AG04450 (cell line): ENCODE measurements at regions of chr7 and their contacts with region 1.

Region 1: GRCh38 chr7:24819916-24820689 is 62.8 kb upstream of the GSDME start:
- DNase-seq: peak; percentile 75
- H3K4me3 ChIP-seq: no peak overlapping the region
- H3K27ac ChIP-seq: peak overlapping the region; percentile 35
- H3K27me3 ChIP-seq: no peaks in the 10 kb centered on the region
- CTCF ChIP-seq: peak; percentile 94

Region 2: DNA sequence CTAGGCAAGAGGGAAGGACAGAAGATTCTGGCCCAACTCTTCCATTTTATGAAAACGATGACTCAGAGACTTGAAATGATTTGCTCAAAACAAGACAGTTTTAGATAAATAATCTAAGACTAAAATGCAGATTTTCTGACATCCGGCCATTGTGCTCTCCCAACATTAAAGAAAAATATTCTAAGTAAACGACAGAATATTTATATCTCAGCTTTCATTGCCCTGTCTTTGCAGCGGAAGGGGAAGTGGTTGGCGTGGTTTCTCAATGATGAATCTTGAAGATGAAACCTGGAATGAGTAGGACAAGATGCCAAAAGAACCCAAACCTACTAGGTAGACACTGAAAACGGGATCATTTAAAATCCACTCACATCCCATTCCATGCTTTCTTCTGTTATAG is 565.0 kb before region 1 on chr7:
- CTCF ChIA-PET with region 1: no interaction called
- POLR2A ChIA-PET with region 1: no interaction called
- DNase-seq: no peak
- H3K4me3 ChIP-seq: no peak overlapping the region
- H3K27ac ChIP-seq: no peak overlapping the region
- H3K27me3 ChIP-seq: no peaks in the 10 kb centered on the region
- CTCF ChIP-seq: no peak

Region 3: GRCh38 chr7:24477398-24478136 is 342.5 kb before region 1 on chr7:
- CTCF ChIA-PET with region 1: no interaction called
- POLR2A ChIA-PET with region 1: no interaction called
- DNase-seq: peak; percentile 67
- H3K4me3 ChIP-seq: no peak overlapping the region
- H3K27ac ChIP-seq: peak overlapping the region; percentile 84
- H3K27me3 ChIP-seq: no peaks in the 10 kb centered on the region
- CTCF ChIP-seq: no peak

Region 4: DNA sequence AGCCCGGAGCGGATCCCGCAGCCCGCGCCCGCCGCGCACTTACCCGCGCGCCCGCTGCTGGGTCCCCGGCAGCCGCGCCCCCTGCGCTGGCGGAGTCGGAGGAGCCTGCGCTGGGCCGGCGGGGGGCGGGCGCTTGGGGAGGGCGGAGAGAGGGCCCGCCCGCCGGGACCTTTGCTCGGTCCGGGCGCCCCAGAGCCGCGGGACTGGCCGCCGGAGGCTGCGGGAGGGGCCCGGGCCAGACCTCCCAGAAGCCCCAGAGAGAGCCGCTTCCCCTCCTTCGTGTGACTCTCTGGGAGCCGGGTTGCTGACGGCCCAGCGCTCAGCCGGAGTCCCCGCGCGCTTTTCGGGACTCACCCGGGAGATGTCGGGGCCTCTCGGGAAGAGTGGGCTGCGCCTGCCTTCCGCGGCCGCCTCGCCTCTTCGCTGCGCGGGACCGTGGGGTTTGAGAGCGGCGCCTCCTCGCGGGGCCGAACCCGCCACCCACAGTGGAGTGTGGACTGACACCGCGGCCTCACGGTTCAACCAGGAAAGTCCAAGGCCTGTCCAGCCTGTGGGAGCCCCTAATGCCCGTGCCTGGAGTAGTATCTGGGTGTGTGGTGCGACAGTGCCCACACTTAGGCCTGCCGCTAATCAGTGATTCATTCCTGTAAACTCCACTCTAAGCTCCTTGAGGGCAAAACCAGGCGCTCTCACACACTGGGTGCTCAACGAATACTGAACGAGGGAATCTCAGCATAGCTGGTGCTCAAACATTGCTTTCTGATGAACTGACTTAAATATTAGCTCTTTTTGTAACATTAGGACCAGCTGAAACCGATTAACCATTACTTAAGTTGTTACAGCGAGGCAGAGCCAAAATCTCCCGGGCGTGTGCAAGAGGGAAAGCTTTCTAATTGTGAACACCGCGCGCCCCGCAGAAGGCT is 62.5 kb before region 1 on chr7 and contains the start of gene GSDME:
- CTCF ChIA-PET with region 1: no interaction called
- POLR2A ChIA-PET with region 1: no interaction called
- DNase-seq: peak; percentile 15
- H3K4me3 ChIP-seq: peak within 1 kb of the TSS; percentile 78
- H3K27ac ChIP-seq: peak within 1 kb of the TSS; percentile 90
- H3K27me3 ChIP-seq: no peaks in the 10 kb centered on the region
- CTCF ChIP-seq: no peak
- polyA plus RNA-seq, gene GSDME: 58.3 and 63.8 TPM in 2 replicates

Region 5: GRCh38 chr7:24800667-24801066 is 19.4 kb before region 1 on chr7:
- CTCF ChIA-PET with region 1: interaction called, 12 read pairs
- POLR2A ChIA-PET with region 1: no interaction called
- DNase-seq: no peak
- H3K4me3 ChIP-seq: no peak overlapping the region
- H3K27ac ChIP-seq: no peak overlapping the region
- H3K27me3 ChIP-seq: no peaks in the 10 kb centered on the region
- CTCF ChIP-seq: no peak

Region 6: GRCh38 chr7:24851786-24852185 is 31.7 kb after region 1 on chr7:
- CTCF ChIA-PET with region 1: interaction called, 13 read pairs
- POLR2A ChIA-PET with region 1: no interaction called
- DNase-seq: peak; percentile 16
- H3K4me3 ChIP-seq: no peak overlapping the region
- H3K27ac ChIP-seq: no peak overlapping the region
- H3K27me3 ChIP-seq: no peaks in the 10 kb centered on the region
- CTCF ChIP-seq: no peak

Region 7: DNA sequence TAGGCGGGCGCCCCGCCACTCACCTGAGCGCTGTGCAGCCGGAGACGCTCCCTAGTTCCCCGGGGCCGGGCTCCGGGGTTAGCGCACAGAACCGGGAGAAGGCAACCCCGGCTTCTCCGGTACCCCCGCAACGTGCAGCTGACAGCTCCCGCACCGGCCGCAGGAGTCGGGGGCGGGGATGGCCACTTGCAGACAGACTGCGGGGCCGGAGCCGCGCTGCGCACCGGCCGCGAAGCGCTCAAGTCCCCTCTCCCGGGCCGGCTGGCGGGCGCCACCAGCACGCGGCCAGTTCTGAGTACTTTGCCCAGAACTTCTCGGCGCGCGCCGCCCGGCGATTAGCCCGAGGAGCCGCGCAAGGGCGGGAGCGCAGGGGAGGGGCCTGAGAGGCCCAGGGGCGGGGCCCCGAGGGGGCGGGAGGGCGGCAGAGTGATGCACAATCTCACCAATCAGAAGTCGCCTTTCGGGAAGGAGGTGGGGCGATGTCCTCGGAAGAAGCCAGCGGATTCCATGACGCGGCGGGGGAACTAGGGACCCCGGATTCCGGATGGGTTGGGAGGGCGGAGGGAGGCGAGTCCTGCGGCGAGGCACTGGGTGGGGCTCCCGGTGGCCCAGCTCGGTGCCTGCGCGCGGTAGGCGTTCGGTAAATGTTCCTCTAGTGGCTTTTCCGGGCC is 159.9 kb after region 1 on chr7 and contains the start of gene OSBPL3:
- CTCF ChIA-PET with region 1: interaction called, 31 read pairs
- POLR2A ChIA-PET with region 1: interaction called, 6 read pairs
- DNase-seq: peak; percentile 91
- H3K4me3 ChIP-seq: peak within 1 kb of the TSS; percentile 79
- H3K27ac ChIP-seq: peak within 1 kb of the TSS; percentile 91
- H3K27me3 ChIP-seq: no peaks in the 10 kb centered on the region
- CTCF ChIP-seq: no peak
- polyA plus RNA-seq, gene OSBPL3: 33.3 and 37.8 TPM in 2 replicates

Region 8: GRCh38 chr7:25069900-25070443 is 249.9 kb after region 1 on chr7:
- CTCF ChIA-PET with region 1: interaction called, 50 read pairs
- POLR2A ChIA-PET with region 1: interaction called, 3 read pairs
- DNase-seq: peak; percentile 56
- H3K4me3 ChIP-seq: no peak overlapping the region
- H3K27ac ChIP-seq: no peak overlapping the region
- H3K27me3 ChIP-seq: no peaks in the 10 kb centered on the region
- CTCF ChIP-seq: peak; percentile 87